WTC11 (cell line): ENCODE measurements at regions of chr4 and their contacts with region 1.

Region 1: DNA sequence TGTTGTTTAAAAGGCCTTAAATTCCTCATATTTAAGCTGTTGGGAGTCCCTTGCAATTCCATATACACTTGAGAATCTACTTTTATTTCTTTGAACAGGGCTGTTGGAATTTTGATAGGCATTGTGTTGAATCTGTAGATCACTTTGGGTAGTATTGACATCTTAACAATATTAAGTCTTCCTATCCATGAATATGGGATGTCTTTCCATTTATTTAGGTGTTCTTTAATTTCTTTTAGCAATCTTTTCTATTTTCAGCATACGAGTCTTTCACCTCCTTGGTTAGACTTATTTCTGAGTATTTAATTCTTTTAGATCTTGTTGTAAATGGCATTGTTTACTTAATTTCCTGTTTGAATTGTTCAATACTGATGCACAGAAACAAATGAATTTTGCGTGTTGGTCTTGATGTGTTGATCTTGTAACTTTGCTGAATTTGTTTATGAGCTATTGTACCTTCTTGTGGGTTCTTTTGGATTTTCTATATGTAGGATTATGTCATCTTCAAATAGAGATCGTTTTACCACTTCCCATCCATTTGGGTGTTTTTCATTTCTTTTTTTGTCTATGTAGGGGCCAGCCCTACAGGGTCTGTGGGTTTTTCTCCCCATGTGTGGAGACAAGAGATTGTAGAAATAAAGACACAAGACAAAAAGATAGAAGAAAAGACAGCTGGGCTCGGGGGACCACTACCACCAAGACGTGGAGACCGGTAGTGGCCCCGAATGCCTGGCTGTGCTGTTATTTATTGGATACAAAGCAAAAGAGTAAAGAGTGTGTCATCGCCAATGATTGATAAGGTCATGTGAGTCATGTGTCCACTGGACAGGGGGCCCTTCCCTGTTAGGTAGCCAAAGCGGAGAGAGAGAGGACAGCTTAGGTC is 18.2 kb upstream of the CTBP1 start:
- DNase-seq: no peak
- ATAC-seq: no peak
- H3K4me3 Mint-ChIP-seq: no peak overlapping the region
- H3K27ac Mint-ChIP-seq: no peak overlapping the region
- H3K4me1 Mint-ChIP-seq: no peaks in the 10 kb centered on the region
- H3K27me3 Mint-ChIP-seq: peaks cover 5% of the 10 kb centered on the region; the same call in 1 of the 2 replicates
- CTCF ChIP-seq: no peak

Region 2: GRCh38 chr4:1167247-1167949 is 99.7 kb before region 1 on chr4:
- CTCF ChIA-PET with region 1: interaction called, 11 read pairs
- POLR2A ChIA-PET with region 1: no interaction called
- DNase-seq: peak; percentile 90
- ATAC-seq: peak; percentile 77
- H3K4me3 Mint-ChIP-seq: peak overlapping the region; percentile 70
- H3K27ac Mint-ChIP-seq: no peak overlapping the region
- H3K4me1 Mint-ChIP-seq: peaks cover 2% of the 10 kb centered on the region; the same call in 1 of the 2 replicates
- H3K27me3 Mint-ChIP-seq: peaks cover 81% of the 10 kb centered on the region
- CTCF ChIP-seq: peak; percentile 79

Region 3: GRCh38 chr4:1244081-1244960 is 22.8 kb before region 1 on chr4:
- CTCF ChIA-PET with region 1: no interaction called
- POLR2A ChIA-PET with region 1: no interaction called
- DNase-seq: no peak
- ATAC-seq: no peak
- H3K4me3 Mint-ChIP-seq: no peak overlapping the region
- H3K27ac Mint-ChIP-seq: 0 out of 2 replicates have a peak overlapping the region, but pooled peaks have one; percentile 49
- H3K4me1 Mint-ChIP-seq: peaks cover 11% of the 10 kb centered on the region
- H3K27me3 Mint-ChIP-seq: no peaks in the 10 kb centered on the region; the same call in 1 of the 2 replicates
- CTCF ChIP-seq: no peak